ENCODE measurements at regions of chr3 and their contacts with region 1.

Region 1: GRCh38 chr3:59857589-59858346 is 807.9 kb upstream of the CFAP20DC start:
- DNase-seq: peak; percentile 88
- H3K4me3 ChIP-seq: no peak overlapping the region
- H3K27ac ChIP-seq: no peak overlapping the region
- H3K4me1 ChIP-seq: no peaks in the 10 kb centered on the region
- H3K27me3 ChIP-seq: no peaks in the 10 kb centered on the region
- CTCF ChIP-seq: peak; percentile 81 to 87 (median 85)
- POLR2A ChIP-seq: no peak

Region 2: GRCh38 chr3:58217209-58217811 is 1640.5 kb before region 1 on chr3:
- intact Hi-C with region 1: no loop called
- DNase-seq: peak; percentile 81
- H3K4me3 ChIP-seq: no peak overlapping the region
- H3K27ac ChIP-seq: peak overlapping the region; percentile 4 to 7
- H3K4me1 ChIP-seq: peaks cover 9% of the 10 kb centered on the region
- H3K27me3 ChIP-seq: no peaks in the 10 kb centered on the region
- CTCF ChIP-seq: peak in 2 of 3 experiments; percentile 58 to 60
- POLR2A ChIP-seq: no peak

Region 3: GRCh38 chr3:59575113-59576001 is 282.4 kb before region 1 on chr3:
- intact Hi-C with region 1: loop called (anchors 10 kb)
- DNase-seq: peak; percentile 96
- H3K4me3 ChIP-seq: no peak overlapping the region
- H3K27ac ChIP-seq: no peak overlapping the region
- H3K4me1 ChIP-seq: no peaks in the 10 kb centered on the region
- H3K27me3 ChIP-seq: no peaks in the 10 kb centered on the region
- CTCF ChIP-seq: peak; percentile 95 to 96 (median 96)
- POLR2A ChIP-seq: no peak

Region 4: DNA sequence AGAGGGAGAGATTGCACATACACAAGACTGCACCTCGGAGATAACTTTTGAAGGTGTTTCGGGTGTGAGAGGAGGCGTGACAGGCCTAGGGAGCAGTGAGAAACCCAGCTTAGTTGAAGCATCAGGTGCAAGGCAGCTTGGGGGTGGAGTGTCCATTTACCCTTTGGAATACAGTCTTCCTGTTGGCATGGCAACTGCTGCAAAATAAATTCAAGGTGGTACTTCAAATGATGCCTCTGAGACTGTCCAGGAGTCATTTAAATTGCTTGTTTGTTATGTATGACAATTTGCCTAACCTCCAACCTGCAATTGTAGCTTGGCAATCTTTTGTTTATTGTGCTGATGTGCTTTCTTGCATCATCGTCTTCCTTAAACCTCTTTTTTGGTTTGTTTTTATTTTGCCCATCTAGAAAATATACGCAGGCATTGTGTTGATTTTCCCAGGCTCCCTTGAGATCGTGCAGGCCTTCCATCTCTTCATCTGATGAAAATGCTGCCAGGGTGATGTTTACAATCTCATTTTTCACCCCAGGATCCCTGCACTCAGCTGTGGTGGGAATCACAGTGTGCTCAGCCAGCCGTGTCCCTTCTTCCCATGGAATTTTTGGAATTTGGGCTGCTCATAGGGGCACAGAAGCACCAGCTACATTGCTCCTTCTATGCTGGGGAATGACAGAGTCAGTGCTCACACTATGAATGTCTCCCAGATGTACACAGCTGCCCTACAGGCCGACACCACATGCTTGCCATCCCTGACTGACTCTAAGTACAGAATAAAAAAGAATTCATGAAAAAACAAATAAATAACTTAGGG is 224.8 kb before region 1 on chr3:
- intact Hi-C with region 1: no loop called
- DNase-seq: no peak
- H3K4me3 ChIP-seq: no peak overlapping the region
- H3K27ac ChIP-seq: no peak overlapping the region
- H3K4me1 ChIP-seq: peaks cover 4% of the 10 kb centered on the region
- H3K27me3 ChIP-seq: no peaks in the 10 kb centered on the region
- CTCF ChIP-seq: no peak
- POLR2A ChIP-seq: no peak